Thyroid gland (tissue), 4 donors: ENCODE measurements at regions of chrX and their contacts with region 1.

Region 1: DNA sequence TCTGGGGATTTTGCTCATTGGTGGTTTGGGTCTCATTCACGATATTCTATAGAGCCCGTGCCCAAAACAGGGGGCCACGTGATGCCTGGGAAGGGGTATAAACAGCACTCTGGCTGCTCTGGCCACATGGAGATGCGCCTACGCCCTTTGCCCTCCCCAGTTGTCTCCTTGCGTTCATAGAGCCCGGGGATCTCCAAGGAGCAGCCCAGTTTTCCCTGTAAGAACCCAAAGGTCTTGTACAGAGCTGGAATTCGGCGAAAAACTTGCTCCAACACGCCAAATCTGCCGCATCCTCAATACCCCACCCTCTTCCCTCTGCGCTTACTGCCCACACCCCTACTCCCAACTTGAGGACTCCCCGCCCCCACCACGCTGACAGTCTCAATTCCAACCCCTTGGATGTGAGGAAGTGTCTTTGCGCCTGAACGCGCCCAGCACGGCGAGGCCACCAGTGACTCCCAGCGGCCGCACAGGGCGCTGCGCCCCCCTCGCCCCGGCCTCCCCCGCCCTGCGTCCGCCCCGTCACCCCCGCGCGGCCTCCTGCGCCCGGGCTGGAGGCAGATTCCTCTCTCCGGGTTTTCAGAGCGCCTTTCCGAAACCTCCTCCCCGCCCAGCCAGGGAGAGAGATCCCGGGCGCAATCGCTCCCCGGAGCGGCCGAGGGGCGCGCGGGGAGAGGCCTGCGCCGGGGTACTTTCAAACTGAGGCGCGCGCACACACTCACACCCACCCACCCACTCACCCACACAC is at the start of gene NHS:
- DNase-seq: peak; percentile 69
- H3K4me3 ChIP-seq: peak within 1 kb of the TSS in 2 of 3 donors; percentile 39 to 44
- H3K27ac ChIP-seq: peak within 1 kb of the TSS in 2 of 3 donors; percentile 17 to 36
- H3K4me1 ChIP-seq: peaks cover 0 to 3% of the 10 kb centered on the region in 2 donors
- H3K27me3 ChIP-seq: no peaks in the 10 kb centered on the region
- CTCF ChIP-seq: peak in 5 of 6 experiments; percentile 23 to 54 (median 35)
- POLR2A ChIP-seq: no peak
- total RNA-seq, gene NHS: 6.9 to 16.9 (median 9.9) TPM

Region 2: GRCh38 chrX:17285983-17286382 is 88.8 kb before region 1 on chrX:
- intact Hi-C with region 1: no loop called
- DNase-seq: no peak
- H3K4me3 ChIP-seq: no peak overlapping the region
- H3K27ac ChIP-seq: no peak overlapping the region
- H3K4me1 ChIP-seq: no peaks in the 10 kb centered on the region
- H3K27me3 ChIP-seq: no peaks in the 10 kb centered on the region
- CTCF ChIP-seq: no peak
- POLR2A ChIP-seq: no peak

Region 3: DNA sequence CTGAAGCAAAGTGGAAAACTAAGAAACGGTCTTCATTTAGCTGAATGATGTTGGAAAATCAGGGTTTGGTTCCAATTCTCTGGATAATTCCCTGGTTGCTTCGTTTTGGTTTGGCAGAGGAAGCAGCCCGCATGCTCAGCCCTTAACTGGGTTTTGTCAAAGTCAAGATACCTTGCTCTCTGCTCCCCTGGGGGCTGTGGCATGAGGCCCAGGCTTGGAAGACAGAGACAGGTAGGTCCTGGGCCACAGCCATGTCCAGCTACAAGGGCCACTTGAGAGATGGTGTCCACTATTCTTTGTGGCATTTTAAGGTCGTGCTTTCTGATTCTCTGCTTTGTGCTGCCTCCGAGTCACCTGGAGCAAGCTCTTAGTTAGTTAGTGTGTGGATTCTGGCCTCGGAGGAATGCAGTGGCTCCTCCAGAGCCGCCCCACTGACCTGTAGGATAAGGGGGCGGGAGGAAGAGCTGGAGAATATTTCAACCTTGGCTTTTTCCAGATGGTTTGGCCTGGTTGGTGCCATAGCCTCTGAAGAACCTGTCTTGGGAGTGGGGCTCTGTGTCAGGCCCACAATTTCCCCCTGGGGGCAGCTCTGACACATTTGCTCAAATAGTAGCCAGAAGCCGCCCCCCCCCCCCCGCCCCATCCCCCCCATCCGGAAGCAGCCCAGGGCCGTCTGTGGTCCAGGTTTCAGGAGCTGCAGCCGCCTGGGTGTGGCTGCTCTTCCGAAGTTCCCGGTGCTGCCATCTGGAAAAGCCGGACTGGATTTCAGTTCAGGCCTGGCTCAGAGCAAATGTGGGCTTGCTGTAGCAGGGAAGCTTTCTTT is 147.3 kb after region 1 on chrX:
- intact Hi-C with region 1: loop called (anchors 5 kb)
- DNase-seq: peak; percentile 78 to 83
- H3K4me3 ChIP-seq: no peak overlapping the region
- H3K27ac ChIP-seq: peak overlapping the region; percentile 22 to 41 (median 31)
- H3K4me1 ChIP-seq: peaks cover 4 to 20% of the 10 kb centered on the region in 2 donors
- H3K27me3 ChIP-seq: no peaks in the 10 kb centered on the region
- CTCF ChIP-seq: no peak
- POLR2A ChIP-seq: no peak